Gastrocnemius medialis (tissue), 4 donors: ENCODE measurements at regions of chr3 and their contacts with region 1.

Region 1: GRCh38 chr3:123960781-123961507 is at the start of gene CCDC14:
- DNase-seq: peak; percentile 81 to 90
- ATAC-seq: peak; percentile 97 to 98
- H3K4me3 ChIP-seq: peak within 1 kb of the TSS; percentile 68 to 89 (median 78)
- H3K27ac ChIP-seq: peak within 1 kb of the TSS; percentile 76 to 80 (median 76)
- H3K4me1 ChIP-seq: peaks cover 8 to 10% of the 10 kb centered on the region in 2 donors
- H3K27me3 ChIP-seq: no peaks in the 10 kb centered on the region
- CTCF ChIP-seq: no peak
- POLR2A ChIP-seq: peak; percentile 58 to 62
- total RNA-seq, gene CCDC14: 3.9 to 16.7 (median 6.4) TPM

Region 2: GRCh38 chr3:123750659-123751420 is 210.1 kb before region 1 on chr3:
- in situ Hi-C with region 1: no loop called
- intact Hi-C with region 1: no loop called
- DNase-seq: no peak
- ATAC-seq: no peak
- H3K4me3 ChIP-seq: no peak overlapping the region
- H3K27ac ChIP-seq: no peak overlapping the region
- H3K4me1 ChIP-seq: no peaks in the 10 kb centered on the region
- H3K27me3 ChIP-seq: no peaks in the 10 kb centered on the region
- CTCF ChIP-seq: no peak
- POLR2A ChIP-seq: no peak

Region 3: GRCh38 chr3:123884203-123884831 is 76.6 kb before region 1 on chr3 and contains the start of gene MYLK:
- in situ Hi-C with region 1: no loop called
- intact Hi-C with region 1: loop called (anchors 10 kb)
- DNase-seq: peak; percentile 59 to 66
- ATAC-seq: peak; percentile 87 to 97
- H3K4me3 ChIP-seq: peak within 1 kb of the TSS; percentile 52 to 58 (median 56)
- H3K27ac ChIP-seq: no peak within 1 kb of the TSS
- H3K4me1 ChIP-seq: peaks cover 0 to 9% of the 10 kb centered on the region in 2 donors
- H3K27me3 ChIP-seq: no peaks in the 10 kb centered on the region
- CTCF ChIP-seq: no peak
- POLR2A ChIP-seq: no peak
- total RNA-seq, gene MYLK: 5.6 to 19.6 (median 8.8) TPM

Region 4: GRCh38 chr3:124032648-124033359 is 71.9 kb after region 1 on chr3:
- in situ Hi-C with region 1: no loop called
- intact Hi-C with region 1: loop called (anchors 2 kb)
- DNase-seq: peak; percentile 69 to 73
- ATAC-seq: peak; percentile 94 to 95
- H3K4me3 ChIP-seq: peak overlapping the region; percentile 80 to 89 (median 84)
- H3K27ac ChIP-seq: peak overlapping the region; percentile 85 to 95 (median 90)
- H3K4me1 ChIP-seq: peaks cover 6 to 12% of the 10 kb centered on the region in 2 donors
- H3K27me3 ChIP-seq: no peaks in the 10 kb centered on the region
- CTCF ChIP-seq: peak in 4 of 5 experiments; percentile 50 to 88 (median 74)
- POLR2A ChIP-seq: peak; percentile 8 to 30

Region 5: DNA sequence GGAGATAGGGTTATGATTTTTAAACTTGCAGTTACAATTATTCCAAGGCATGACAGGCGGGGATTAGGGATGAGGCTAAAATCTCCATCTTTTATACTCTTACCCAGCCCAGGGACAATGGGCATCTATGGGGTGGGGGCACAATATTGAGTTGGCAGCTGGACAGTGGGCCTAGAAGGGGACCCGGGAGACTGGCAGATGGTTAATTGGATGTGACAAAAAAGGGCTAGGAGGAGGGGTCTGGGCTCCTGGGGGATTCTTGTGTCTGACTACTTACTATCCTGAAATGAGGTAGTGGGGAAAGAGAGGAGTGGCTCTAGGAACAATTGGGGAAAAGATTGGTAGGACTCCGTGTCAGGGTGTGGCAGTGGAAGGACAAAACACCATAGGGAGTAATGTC is 84.0 kb after region 1 on chr3:
- in situ Hi-C with region 1: no loop called
- intact Hi-C with region 1: no loop called
- DNase-seq: no peak
- ATAC-seq: no peak
- H3K4me3 ChIP-seq: no peak overlapping the region
- H3K27ac ChIP-seq: no peak overlapping the region
- H3K4me1 ChIP-seq: no peaks in the 10 kb centered on the region
- H3K27me3 ChIP-seq: no peaks in the 10 kb centered on the region
- CTCF ChIP-seq: no peak
- POLR2A ChIP-seq: no peak